GM12878 (cell line): ENCODE measurements at regions of chr16 and their contacts with region 1.

Region 1: DNA sequence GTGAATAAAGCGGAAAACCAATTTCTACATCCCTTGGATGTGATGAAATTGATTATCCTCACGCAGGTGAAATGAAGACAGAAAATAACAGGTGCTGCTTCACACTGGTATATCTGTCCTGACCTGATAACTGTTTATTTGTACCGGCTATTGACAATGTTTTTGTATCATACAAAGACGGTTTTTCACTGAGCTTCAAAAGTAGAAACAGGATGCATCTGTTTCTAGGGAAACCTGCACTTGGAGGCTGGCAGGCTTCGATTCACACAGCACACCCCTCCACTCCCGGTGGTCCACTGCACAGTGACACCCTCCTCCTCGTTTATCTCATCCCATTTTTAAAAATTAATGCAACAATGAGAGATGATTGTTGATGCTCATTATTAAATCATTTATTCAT is 104.5 kb downstream of the CPPED1 start:
- DNase-seq: no peak
- ATAC-seq: no peak
- H3K4me3 ChIP-seq: no peak overlapping the region
- H3K27ac ChIP-seq: no peak overlapping the region
- H3K4me1 ChIP-seq: no peaks in the 10 kb centered on the region
- H3K27me3 ChIP-seq: no peaks in the 10 kb centered on the region
- CTCF ChIP-seq: no peak
- EP300 ChIP-seq: no peak
- POLR2A ChIP-seq: no peak
- RAD21 ChIP-seq: no peak

Region 2: GRCh38 chr16:12661656-12662172 is 37.4 kb before region 1 on chr16:
- CTCF ChIA-PET with region 1: no interaction called
- POLR2A ChIA-PET with region 1: interaction called, 10 read pairs
- RAD21 ChIA-PET with region 1: no interaction called
- SMC1A ChIA-PET with region 1: no interaction called
- in situ Hi-C with region 1: no loop called
- intact Hi-C with region 1: no loop called
- DNase-seq: no peak
- ATAC-seq: peak; percentile 31; the same call in 1 of the 3 replicates
- H3K4me3 ChIP-seq: no peak overlapping the region
- H3K27ac ChIP-seq: no peak overlapping the region
- H3K4me1 ChIP-seq: no peaks in the 10 kb centered on the region
- H3K27me3 ChIP-seq: no peaks in the 10 kb centered on the region
- CTCF ChIP-seq: no peak
- EP300 ChIP-seq: no peak
- POLR2A ChIP-seq: no peak
- RAD21 ChIP-seq: no peak

Region 3: GRCh38 chr16:12719972-12720371 is 20.8 kb after region 1 on chr16:
- CTCF ChIA-PET with region 1: no interaction called
- POLR2A ChIA-PET with region 1: no interaction called
- RAD21 ChIA-PET with region 1: no interaction called
- SMC1A ChIA-PET with region 1: no interaction called
- in situ Hi-C with region 1: no loop called
- intact Hi-C with region 1: no loop called
- DNase-seq: no peak
- ATAC-seq: no peak
- H3K4me3 ChIP-seq: no peak overlapping the region
- H3K27ac ChIP-seq: no peak overlapping the region
- H3K4me1 ChIP-seq: no peaks in the 10 kb centered on the region
- H3K27me3 ChIP-seq: no peaks in the 10 kb centered on the region
- CTCF ChIP-seq: no peak
- EP300 ChIP-seq: no peak
- POLR2A ChIP-seq: no peak
- RAD21 ChIP-seq: no peak